Kidney (tissue), 22 donors: ENCODE measurements at regions of chr3 and their contacts with region 1.

Region 1: DNA sequence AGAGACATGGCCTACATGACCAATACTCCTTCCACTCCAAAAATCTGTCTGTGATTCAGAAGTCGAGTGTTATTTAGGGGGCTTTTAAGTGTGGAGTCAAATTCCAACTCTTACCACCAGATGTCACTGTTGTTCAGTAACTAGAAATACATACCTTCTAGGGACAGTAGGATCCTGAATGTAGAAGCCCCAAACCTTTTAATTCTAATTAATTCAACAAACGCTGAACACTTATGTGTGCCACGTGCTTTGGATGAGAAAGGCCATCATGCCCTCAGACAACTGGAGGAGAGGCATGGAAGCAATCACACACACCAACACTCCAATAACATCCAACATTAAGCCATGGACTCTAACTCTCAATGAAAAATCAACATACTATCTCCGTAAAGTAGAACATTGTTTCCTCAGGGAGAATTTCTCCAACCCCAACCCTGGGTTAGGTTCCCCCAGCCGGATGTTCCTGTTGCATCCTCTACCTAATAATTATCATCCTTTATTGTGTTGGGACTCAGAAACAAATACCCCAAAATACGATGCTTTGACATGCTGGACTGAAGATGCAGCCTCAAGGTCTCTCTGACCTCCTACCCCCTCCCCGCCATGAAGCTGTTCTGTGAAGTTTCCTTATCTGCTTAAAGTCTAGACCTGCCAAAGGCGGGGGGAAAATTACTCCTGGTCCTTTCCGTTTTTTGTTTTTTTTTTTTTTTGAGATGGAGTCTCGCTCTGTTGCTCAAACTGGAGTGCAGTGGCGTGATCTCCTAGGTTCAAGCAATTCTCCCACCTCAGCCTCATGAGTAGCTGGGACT is 8.0 kb upstream of the CCDC13 start:
- DNase-seq: peak in 2 of 5 donors; percentile 82 to 88
- H3K4me3 ChIP-seq: no peak overlapping the region
- H3K27ac ChIP-seq: no peak overlapping the region
- H3K4me1 ChIP-seq: peaks cover 0 to 9% (median 5%) of the 10 kb centered on the region in 3 donors
- H3K27me3 ChIP-seq: no peaks in the 10 kb centered on the region
- CTCF ChIP-seq: peak; percentile 73

Region 2: DNA sequence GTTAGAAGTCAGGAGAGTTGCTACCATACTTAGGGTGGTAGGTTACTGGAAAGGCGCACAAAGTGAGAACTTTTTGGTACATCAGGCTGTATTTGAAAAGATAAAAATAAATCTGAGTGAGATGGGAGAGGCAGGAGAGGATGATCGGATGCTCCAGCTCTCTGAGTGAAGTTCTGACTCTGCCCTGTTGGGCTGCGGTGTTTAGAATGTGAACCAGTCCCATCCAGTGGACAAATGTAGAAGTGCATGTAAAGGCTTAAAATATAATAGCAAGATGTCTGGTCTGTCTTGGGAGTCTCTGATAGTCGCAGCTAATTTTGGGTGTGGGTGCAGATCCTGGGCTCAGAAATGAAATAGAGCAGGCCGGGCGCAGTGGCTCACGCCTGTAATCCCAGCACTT is 58.5 kb after region 1 on chr3:
- intact Hi-C with region 1: loop called (anchors 10 kb)
- DNase-seq: peak in 3 of 5 donors; percentile 50 to 87 (median 81)
- H3K4me3 ChIP-seq: no peak overlapping the region
- H3K27ac ChIP-seq: no peak overlapping the region
- H3K4me1 ChIP-seq: peaks cover 0 to 8% (median 3%) of the 10 kb centered on the region in 3 donors
- H3K27me3 ChIP-seq: no peaks in the 10 kb centered on the region
- CTCF ChIP-seq: peak; percentile 78